SK-N-SH (cell line): ENCODE measurements at regions of chr17 and their contacts with region 1.

Region 1: GRCh38 chr17:74089869-74090464 is 113.5 kb upstream of the RPL38 start:
- DNase-seq: peak; percentile 63
- H3K4me3 ChIP-seq: no peak overlapping the region
- H3K27ac ChIP-seq: no peak overlapping the region
- H3K4me1 ChIP-seq: peaks cover 0 to 8% of the 10 kb centered on the region in 2 experiments; a peak in 2 of 4 replicates
- H3K27me3 ChIP-seq: no peaks in the 10 kb centered on the region
- CTCF ChIP-seq: peak; percentile 23
- EP300 ChIP-seq: no peak
- RAD21 ChIP-seq: peak; percentile 76

Region 2: GRCh38 chr17:74024871-74025531 is 65.0 kb before region 1 on chr17:
- CTCF ChIA-PET with region 1: no interaction called
- POLR2A ChIA-PET with region 1: no interaction called
- DNase-seq: no peak
- H3K4me3 ChIP-seq: no peak overlapping the region
- H3K27ac ChIP-seq: no peak overlapping the region
- H3K4me1 ChIP-seq: no peaks in the 10 kb centered on the region; a peak in 1 of 4 replicates
- H3K27me3 ChIP-seq: no peaks in the 10 kb centered on the region
- CTCF ChIP-seq: no peak
- EP300 ChIP-seq: no peak
- RAD21 ChIP-seq: no peak

Region 3: DNA sequence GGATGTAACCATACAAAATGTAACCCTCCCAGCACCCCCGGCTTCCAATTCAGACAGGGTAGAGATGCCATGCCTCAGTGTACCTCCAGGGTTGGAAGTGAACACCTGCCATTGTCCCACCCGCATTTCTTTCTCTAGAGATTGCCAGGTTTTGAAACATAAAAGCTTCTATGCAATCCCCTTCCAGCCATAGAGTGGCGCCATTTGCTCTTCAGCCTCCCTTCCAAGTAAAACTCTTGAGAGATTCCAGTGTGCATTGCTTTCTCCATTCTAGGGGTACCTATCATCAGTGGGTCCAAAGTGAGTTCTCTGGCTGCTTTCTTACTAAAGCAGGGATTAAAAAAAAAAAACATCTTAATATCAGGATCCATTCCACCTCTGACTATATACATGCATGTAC is 19.6 kb before region 1 on chr17:
- CTCF ChIA-PET with region 1: interaction called, 36 read pairs
- POLR2A ChIA-PET with region 1: no interaction called
- DNase-seq: no peak
- H3K4me3 ChIP-seq: no peak overlapping the region
- H3K27ac ChIP-seq: no peak overlapping the region
- H3K4me1 ChIP-seq: no peaks in the 10 kb centered on the region
- H3K27me3 ChIP-seq: no peaks in the 10 kb centered on the region
- CTCF ChIP-seq: no peak
- EP300 ChIP-seq: no peak
- RAD21 ChIP-seq: peak; percentile 26; the same call in 1 of the 2 replicates

Region 4: GRCh38 chr17:74110467-74110866 is 20.5 kb after region 1 on chr17:
- CTCF ChIA-PET with region 1: interaction called, 17 read pairs
- POLR2A ChIA-PET with region 1: no interaction called
- DNase-seq: no peak
- H3K4me3 ChIP-seq: no peak overlapping the region
- H3K27ac ChIP-seq: no peak overlapping the region
- H3K4me1 ChIP-seq: peaks cover 0 to 9% of the 10 kb centered on the region in 2 experiments; a peak in 1 of 4 replicates
- H3K27me3 ChIP-seq: no peaks in the 10 kb centered on the region
- CTCF ChIP-seq: no peak
- EP300 ChIP-seq: no peak
- RAD21 ChIP-seq: no peak

Region 5: GRCh38 chr17:74152591-74153455 is 62.9 kb after region 1 on chr17:
- CTCF ChIA-PET with region 1: interaction called, 13 read pairs
- POLR2A ChIA-PET with region 1: no interaction called
- DNase-seq: peak; percentile 91
- H3K4me3 ChIP-seq: no peak overlapping the region
- H3K27ac ChIP-seq: peak overlapping the region in 1 of 2 experiments; percentile 96; a peak in 2 of 4 replicates
- H3K4me1 ChIP-seq: peaks cover 0 to 37% of the 10 kb centered on the region in 2 experiments; a peak in 2 of 4 replicates
- H3K27me3 ChIP-seq: no peaks in the 10 kb centered on the region
- CTCF ChIP-seq: no peak
- EP300 ChIP-seq: peak in 1 of 2 experiments; percentile 90; a peak in 2 of 4 replicates
- RAD21 ChIP-seq: peak; percentile 38

Region 6: GRCh38 chr17:74203439-74204240 is 113.7 kb after region 1 on chr17 and contains the start of gene RPL38:
- CTCF ChIA-PET with region 1: interaction called, 17 read pairs
- POLR2A ChIA-PET with region 1: interaction called, 3 read pairs
- DNase-seq: peak; percentile 98
- H3K4me3 ChIP-seq: peak within 1 kb of the TSS; percentile 72 to 99
- H3K27ac ChIP-seq: peak within 1 kb of the TSS; percentile 63 to 81
- H3K4me1 ChIP-seq: peaks cover 22 to 36% of the 10 kb centered on the region in 2 experiments
- H3K27me3 ChIP-seq: no peaks in the 10 kb centered on the region
- CTCF ChIP-seq: peak; percentile 99
- EP300 ChIP-seq: peak in 1 of 2 experiments; percentile 75; a peak in 3 of 4 replicates
- RAD21 ChIP-seq: peak; percentile 57
- polyA plus RNA-seq, gene RPL38: 816 and 4,154 TPM in 2 replicates

Region 7: GRCh38 chr17:74379495-74380085 is 289.6 kb after region 1 on chr17:
- CTCF ChIA-PET with region 1: no interaction called
- POLR2A ChIA-PET with region 1: no interaction called
- DNase-seq: peak; percentile 98
- H3K4me3 ChIP-seq: no peak overlapping the region
- H3K27ac ChIP-seq: no peak overlapping the region
- H3K4me1 ChIP-seq: peaks cover 0 to 2% of the 10 kb centered on the region in 2 experiments; a peak in 1 of 4 replicates
- H3K27me3 ChIP-seq: no peaks in the 10 kb centered on the region
- CTCF ChIP-seq: peak; percentile 52
- EP300 ChIP-seq: no peak
- RAD21 ChIP-seq: peak; percentile 99